Posterior vena cava (tissue), 2 donors: ENCODE measurements at regions of chr14 and their contacts with region 1.

Region 1: GRCh38 chr14:73245401-73246325 is 8.4 kb downstream of the PAPLN start:
- DNase-seq: peak; percentile 87

Region 2: DNA sequence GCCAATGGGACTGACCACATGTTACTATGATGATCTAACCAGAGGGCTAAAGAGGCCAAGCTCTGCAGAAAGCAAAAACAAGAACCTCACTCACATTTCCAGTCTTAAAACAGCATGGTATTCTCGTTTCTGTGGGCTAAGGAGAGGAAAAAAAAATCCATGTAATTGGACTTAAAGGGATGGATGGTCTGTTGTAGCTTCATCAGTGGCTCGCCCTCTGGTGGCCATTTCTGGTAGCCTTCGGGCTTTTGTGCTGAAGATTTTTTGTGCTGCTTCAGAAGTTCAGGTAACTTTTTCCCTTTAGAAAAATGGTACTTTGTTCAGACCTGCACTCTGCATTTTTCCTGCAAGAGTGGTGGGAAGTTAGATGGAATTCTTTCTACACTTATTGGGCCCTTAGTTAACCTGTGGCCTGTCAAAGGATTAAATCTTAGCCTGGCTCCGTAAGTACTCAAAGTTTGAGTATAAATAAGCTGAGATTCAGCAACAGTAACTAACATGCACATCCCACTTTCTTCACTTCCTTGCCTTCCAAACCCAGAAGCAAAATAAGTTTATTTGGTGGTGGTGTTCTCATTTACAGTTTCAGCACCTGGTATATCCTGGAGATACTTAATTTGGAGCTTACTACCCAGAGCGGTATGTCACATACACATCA is 297.1 kb before region 1 on chr14:
- intact Hi-C with region 1: no loop called
- DNase-seq: peak; percentile 85

Region 3: DNA sequence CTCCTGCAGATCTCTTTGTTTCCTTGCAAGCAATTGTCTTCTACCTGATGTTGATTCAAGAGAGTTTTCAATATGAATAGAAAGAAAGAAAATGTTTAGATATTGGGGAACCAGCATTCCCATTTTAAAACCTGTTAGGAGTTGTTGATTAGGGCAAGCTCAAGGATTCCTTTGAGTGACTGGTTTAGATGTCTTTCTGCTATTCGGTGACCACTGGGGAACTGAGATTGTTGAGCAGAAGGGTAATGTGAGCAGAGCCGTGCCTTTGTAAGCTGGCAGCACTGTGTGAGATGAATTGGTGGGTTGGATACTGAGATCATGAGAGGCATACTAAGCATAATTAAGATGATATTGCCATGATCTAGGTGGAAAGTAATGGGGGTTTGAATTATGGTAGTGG is 47.4 kb before region 1 on chr14:
- intact Hi-C with region 1: loop called in 1 of 2 experiments (anchors 1 kb)
- DNase-seq: no peak